ENCODE measurements at regions of chr20 and their contacts with region 1.

Region 1: DNA sequence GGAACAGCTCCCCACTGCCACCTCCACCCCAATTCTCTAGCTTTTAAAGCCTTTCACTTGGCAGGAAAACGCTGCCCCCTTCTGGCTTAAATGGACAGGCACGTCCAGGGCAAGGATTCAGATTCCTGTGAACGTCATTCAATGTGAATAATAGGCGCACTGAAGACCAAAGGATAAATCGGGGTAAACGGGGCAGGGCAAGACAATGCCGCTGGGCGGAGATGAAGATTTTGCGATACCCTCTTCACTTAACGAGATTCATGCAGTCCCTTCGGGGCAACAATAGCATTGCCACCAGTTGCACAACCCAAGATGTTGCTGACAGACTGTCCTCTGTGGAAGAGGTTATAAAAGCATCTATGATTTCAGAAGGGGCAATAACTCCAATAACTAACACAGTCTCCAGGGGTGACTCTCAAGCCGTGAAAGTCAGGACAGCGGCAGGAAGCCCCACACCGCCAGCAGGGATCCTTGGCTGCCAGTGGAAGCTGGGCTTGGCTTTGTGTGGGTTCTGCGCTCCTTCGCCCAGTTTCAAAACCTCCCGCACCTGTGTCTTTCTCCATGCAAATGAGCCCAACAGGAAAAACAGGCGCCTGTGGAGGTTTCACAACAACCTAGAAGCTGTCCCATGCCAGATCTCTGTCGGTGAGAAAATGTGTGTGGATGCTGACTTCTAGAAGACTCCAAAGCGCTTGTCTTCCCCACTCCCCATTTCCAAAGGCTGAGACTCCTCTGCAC is 291.8 kb downstream of the BMP7 start:
- DNase-seq: peak; percentile 59
- H3K4me3 ChIP-seq: no peak overlapping the region
- H3K27ac ChIP-seq: no peak overlapping the region
- H3K4me1 ChIP-seq: no peaks in the 10 kb centered on the region
- H3K27me3 ChIP-seq: peaks cover 42% of the 10 kb centered on the region
- CTCF ChIP-seq: peak; percentile 51 to 64 (median 57)
- EP300 ChIP-seq: no peak
- POLR2A ChIP-seq: no peak

Region 2: GRCh38 chr20:56540420-56540819 is 434.2 kb before region 1 on chr20:
- in situ Hi-C with region 1: loop called in 1 of 4 experiments (anchors 10 kb)
- intact Hi-C with region 1: no loop called
- DNase-seq: no peak
- H3K4me3 ChIP-seq: no peak overlapping the region
- H3K27ac ChIP-seq: no peak overlapping the region
- H3K4me1 ChIP-seq: no peaks in the 10 kb centered on the region
- H3K27me3 ChIP-seq: no peaks in the 10 kb centered on the region
- CTCF ChIP-seq: no peak
- EP300 ChIP-seq: no peak
- POLR2A ChIP-seq: no peak

Region 3: GRCh38 chr20:56788040-56788983 is 186.4 kb before region 1 on chr20:
- in situ Hi-C with region 1: no loop called
- intact Hi-C with region 1: no loop called
- DNase-seq: peak; percentile 17
- H3K4me3 ChIP-seq: no peak overlapping the region
- H3K27ac ChIP-seq: peak overlapping the region; percentile 65 to 83 (median 76)
- H3K4me1 ChIP-seq: peaks cover 0 to 10% (median 0%) of the 10 kb centered on the region in 4 donors
- H3K27me3 ChIP-seq: no peaks in the 10 kb centered on the region
- CTCF ChIP-seq: no peak
- EP300 ChIP-seq: peak; percentile 63
- POLR2A ChIP-seq: no peak

Region 4: DNA sequence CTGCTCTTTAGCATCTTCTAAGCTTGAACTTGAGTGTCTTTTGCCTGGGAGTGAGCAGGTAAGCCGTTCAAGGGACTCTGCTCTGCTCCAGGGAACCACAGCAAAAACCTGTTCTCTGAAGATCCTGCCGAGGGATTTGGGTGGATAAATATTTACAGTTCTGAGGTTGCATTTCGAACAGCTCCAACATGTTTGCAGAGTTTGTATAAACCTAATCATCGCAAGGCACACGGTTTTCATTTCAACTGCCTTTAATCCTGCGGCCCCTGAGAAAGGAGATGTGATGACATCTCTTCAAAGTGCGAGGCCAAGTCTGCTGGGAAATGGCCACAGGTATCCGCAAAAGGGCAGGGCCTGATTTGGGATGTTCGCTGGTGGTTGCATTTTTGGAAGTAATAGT is 52.1 kb before region 1 on chr20:
- in situ Hi-C with region 1: no loop called
- intact Hi-C with region 1: no loop called
- DNase-seq: no peak
- H3K4me3 ChIP-seq: no peak overlapping the region
- H3K27ac ChIP-seq: no peak overlapping the region
- H3K4me1 ChIP-seq: peaks cover 0 to 13% (median 5%) of the 10 kb centered on the region in 4 donors
- H3K27me3 ChIP-seq: peaks cover 55% of the 10 kb centered on the region
- CTCF ChIP-seq: no peak
- EP300 ChIP-seq: no peak
- POLR2A ChIP-seq: no peak

Measured in transverse colon (tissue), 4 donors.